ENCODE measurements at regions of chrX and their contacts with region 1.

Region 1: GRCh38 chrX:110317820-110318658 is at the start of gene AMMECR1:
- DNase-seq: peak; percentile 62 to 86
- H3K4me3 ChIP-seq: peak within 1 kb of the TSS; percentile 63
- H3K27ac ChIP-seq: peak within 1 kb of the TSS; percentile 85
- H3K4me1 ChIP-seq: peaks cover 33% of the 10 kb centered on the region
- H3K27me3 ChIP-seq: no peaks in the 10 kb centered on the region
- CTCF ChIP-seq: no peak
- total RNA-seq, gene AMMECR1: 24.4 and 35.4 TPM in 2 replicates

Region 2: GRCh38 chrX:110163488-110163887 is 154.6 kb before region 1 on chrX:
- CTCF ChIA-PET with region 1: no interaction called
- POLR2A ChIA-PET with region 1: interaction called, 4 read pairs
- intact Hi-C with region 1: loop called (anchors 1 kb)
- DNase-seq: peak in 1 of 2 experiments; percentile 80
- H3K4me3 ChIP-seq: no peak overlapping the region; the same call in 1 of the 2 replicates
- H3K27ac ChIP-seq: peak overlapping the region; percentile 75
- H3K4me1 ChIP-seq: peaks cover 49% of the 10 kb centered on the region
- H3K27me3 ChIP-seq: no peaks in the 10 kb centered on the region
- CTCF ChIP-seq: no peak

Region 3: DNA sequence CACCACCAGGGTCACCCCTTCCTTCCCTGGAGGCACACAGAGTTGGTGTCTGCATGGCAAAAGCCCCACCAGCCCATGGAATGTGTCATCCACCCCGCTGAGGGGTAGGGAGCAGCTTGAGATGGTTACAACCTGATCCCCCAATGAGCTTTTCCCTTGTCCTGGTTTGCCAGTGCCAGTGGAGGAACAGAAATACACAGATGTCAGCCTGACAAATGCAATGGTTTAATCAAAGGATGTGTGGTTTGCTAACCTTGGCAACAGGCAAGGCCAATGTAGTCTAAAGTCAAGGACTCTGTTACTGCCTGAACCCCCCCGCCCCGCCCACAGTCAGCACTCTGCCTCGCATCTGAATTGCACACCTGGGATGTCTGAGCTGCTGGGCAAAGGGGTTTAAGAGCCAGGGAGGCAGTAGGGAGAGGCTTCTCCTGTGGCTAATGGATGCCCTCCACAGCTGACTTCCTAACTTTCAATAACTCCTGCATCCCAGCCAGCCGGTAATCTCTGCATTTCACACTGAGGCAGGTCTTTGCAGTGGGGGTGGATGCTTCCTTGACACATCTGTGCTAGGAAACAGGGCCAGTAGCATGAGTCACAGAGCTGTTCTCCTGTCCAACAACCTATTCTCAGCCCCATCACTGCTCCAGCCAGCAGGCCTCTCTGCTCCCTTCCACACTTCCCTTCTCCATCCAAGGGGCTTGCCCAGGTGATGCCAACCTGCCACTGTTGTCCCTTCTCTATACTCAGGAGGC is 137.7 kb before region 1 on chrX:
- CTCF ChIA-PET with region 1: no interaction called
- POLR2A ChIA-PET with region 1: interaction called, 4 read pairs
- intact Hi-C with region 1: loop called (anchors 5 kb)
- DNase-seq: peak; percentile 38 to 49
- H3K4me3 ChIP-seq: no peak overlapping the region
- H3K27ac ChIP-seq: peak overlapping the region; percentile 48
- H3K4me1 ChIP-seq: peaks cover 36% of the 10 kb centered on the region
- H3K27me3 ChIP-seq: no peaks in the 10 kb centered on the region
- CTCF ChIP-seq: no peak

Region 4: DNA sequence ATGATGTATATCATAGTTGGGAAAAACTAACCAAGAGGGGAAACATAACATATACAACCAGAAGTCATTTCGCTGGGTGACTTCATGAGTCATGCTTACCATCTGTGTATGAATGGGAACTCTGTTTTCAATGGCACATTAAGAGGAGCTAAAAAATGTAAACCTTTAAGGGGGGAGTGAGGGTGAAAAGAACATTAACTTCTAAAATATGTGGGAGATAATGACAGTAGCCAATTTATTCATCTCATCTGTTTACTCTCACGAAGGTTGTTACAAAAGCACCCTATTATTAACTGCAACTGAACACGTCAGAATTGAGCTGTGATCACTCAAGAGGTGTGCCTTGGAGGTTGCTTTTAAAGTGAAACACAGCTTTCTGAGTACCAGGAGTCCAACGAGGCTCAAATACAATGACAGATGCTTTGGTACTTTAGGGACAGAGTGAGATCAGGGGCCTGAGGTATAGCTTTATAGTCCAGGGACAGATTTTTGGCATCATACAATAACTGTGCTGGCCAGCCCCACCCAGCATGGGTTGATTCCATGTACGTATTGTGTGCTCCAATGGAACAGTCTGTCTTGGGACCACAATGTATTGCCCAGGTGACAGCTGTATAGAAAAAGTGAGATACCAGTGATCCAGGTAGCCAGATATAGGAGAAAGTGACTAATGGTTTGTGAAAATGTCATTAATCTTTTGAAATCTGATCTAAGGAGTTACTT is 107.5 kb before region 1 on chrX:
- CTCF ChIA-PET with region 1: no interaction called
- POLR2A ChIA-PET with region 1: interaction called, 3 read pairs
- intact Hi-C with region 1: loop called (anchors 5 kb)
- DNase-seq: peak; percentile 4 to 89
- H3K4me3 ChIP-seq: no peak overlapping the region; the same call in 1 of the 2 replicates
- H3K27ac ChIP-seq: peak overlapping the region; percentile 77
- H3K4me1 ChIP-seq: peaks cover 42% of the 10 kb centered on the region
- H3K27me3 ChIP-seq: no peaks in the 10 kb centered on the region
- CTCF ChIP-seq: no peak

Region 5: DNA sequence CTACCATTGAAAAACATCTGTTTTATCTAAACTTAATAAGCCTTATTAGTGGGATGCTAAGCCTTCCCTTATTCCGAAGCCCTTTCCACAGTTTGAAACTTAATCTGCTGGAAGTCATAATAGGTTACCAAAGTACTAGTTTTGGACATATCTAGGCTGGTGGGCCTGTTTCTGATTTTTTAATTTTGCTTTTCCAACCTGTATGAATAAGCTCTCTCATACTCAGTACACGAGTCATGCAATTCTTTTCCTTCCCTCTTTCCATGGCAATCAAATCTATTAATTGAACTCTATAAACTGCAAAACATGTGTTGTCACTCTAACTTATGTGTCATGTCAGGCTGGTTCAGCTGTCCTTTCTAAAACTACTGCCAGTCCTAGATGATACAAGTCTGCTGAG is 91.1 kb before region 1 on chrX:
- CTCF ChIA-PET with region 1: no interaction called
- POLR2A ChIA-PET with region 1: no interaction called
- intact Hi-C with region 1: loop called (anchors 5 kb)
- DNase-seq: no peak
- H3K4me3 ChIP-seq: no peak overlapping the region
- H3K27ac ChIP-seq: 0 out of 2 replicates have a peak overlapping the region, but pooled peaks have one; percentile 20
- H3K4me1 ChIP-seq: peaks cover 27% of the 10 kb centered on the region
- H3K27me3 ChIP-seq: no peaks in the 10 kb centered on the region
- CTCF ChIP-seq: no peak

Region 6: DNA sequence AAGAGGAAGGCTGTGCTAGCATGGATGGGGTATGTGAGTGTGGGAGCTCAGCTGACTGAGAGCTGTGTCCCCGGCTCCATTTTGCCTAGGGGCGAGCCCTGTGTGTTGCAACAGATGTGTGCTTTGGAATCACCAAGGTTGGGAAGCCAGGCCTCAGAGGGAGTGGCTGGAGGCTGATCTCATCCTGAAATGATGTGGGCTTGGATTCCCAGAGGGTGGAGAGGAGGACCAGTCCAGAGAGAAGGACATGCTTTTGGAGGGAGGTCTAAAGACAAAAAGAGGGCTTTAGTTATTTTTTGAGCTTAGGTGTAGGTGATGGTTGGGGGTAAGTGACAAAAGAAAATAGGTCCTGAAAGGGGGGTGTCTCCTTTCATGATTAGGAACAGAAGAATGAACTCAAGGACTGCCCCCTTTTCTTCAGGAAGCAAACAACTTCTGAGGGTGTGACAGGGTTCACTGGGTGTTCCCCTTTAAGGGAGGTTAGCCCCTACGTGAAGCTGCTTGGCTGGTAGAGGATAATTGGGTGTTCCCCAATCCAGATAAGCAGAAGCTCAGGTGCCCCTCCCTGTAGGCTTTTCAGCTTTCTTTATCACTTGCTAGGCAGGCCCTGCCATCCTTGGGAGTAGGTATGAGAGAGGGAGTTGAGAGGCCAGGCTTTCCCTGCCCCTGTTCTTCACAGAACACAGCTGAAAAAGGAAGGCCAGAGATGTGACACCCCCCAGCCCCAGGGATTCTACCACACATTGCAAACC is 84.6 kb after region 1 on chrX:
- CTCF ChIA-PET with region 1: no interaction called
- POLR2A ChIA-PET with region 1: no interaction called
- intact Hi-C with region 1: loop called (anchors 1 kb)
- DNase-seq: peak; percentile 77 to 86
- H3K4me3 ChIP-seq: peak overlapping the region; percentile 6; the same call in 1 of the 2 replicates
- H3K27ac ChIP-seq: peak overlapping the region; percentile 70
- H3K4me1 ChIP-seq: peaks cover 60% of the 10 kb centered on the region
- H3K27me3 ChIP-seq: no peaks in the 10 kb centered on the region
- CTCF ChIP-seq: no peak